H1 (cell line): ENCODE measurements at regions of chr19 and their contacts with region 1.

Region 1: GRCh38 chr19:34475026-34475974 is 6.3 kb upstream of the WTIP start:
- DNase-seq: no peak
- H3K4me3 ChIP-seq: no peak overlapping the region
- H3K27ac ChIP-seq: no peak overlapping the region
- H3K4me1 ChIP-seq: peaks cover 0 to 5% (median 3%) of the 10 kb centered on the region in 4 experiments; a peak in 5 of 7 replicates
- H3K27me3 ChIP-seq: peaks cover 0 to 7% (median 5%) of the 10 kb centered on the region in 4 experiments; a peak in 6 of 7 replicates
- CTCF ChIP-seq: no peak
- EP300 ChIP-seq: no peak
- POLR2A ChIP-seq: no peak
- RAD21 ChIP-seq: no peak

Region 2: DNA sequence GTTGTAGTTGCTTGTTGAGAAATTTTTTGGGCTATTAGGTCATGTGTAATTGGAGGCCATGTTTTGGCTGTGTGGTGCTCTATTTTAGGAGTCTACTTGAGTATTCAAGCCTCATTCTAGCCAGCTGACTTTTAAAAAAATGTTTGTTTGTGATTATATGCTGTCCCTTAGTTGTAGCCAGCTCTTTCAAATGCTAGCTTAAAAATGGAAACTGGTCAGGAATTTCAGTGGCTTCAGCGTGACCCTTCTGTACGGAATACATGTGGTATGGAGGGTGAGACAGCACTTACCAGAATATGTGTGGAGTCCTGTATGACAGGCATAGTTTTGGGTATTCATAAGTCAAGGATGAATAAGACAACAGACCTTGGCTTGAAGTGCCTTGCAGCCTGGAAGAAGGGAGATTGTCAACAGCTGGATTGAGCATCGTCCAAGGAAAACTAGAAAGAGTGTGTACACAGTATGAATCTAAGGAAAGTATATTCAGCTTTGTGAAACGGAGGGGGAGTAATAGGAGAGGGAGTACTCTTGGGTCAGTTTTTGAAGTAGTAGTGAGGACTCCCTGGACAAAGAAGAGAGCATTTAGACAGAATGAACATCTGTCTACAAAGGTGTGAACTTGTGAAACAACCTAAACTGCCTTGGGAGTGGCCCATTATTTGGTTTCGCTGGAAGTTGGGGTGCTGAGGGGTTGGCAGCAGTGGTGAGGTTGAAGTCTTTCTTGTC is 13.8 kb before region 1 on chr19:
- CTCF ChIA-PET with region 1: interaction called, 6 read pairs
- POLR2A ChIA-PET with region 1: interaction called, 47 read pairs
- DNase-seq: no peak
- H3K4me3 ChIP-seq: no peak overlapping the region
- H3K27ac ChIP-seq: no peak overlapping the region
- H3K4me1 ChIP-seq: no peaks in the 10 kb centered on the region
- H3K27me3 ChIP-seq: no peaks in the 10 kb centered on the region
- CTCF ChIP-seq: no peak
- EP300 ChIP-seq: no peak
- POLR2A ChIP-seq: no peak
- RAD21 ChIP-seq: no peak

Region 3: DNA sequence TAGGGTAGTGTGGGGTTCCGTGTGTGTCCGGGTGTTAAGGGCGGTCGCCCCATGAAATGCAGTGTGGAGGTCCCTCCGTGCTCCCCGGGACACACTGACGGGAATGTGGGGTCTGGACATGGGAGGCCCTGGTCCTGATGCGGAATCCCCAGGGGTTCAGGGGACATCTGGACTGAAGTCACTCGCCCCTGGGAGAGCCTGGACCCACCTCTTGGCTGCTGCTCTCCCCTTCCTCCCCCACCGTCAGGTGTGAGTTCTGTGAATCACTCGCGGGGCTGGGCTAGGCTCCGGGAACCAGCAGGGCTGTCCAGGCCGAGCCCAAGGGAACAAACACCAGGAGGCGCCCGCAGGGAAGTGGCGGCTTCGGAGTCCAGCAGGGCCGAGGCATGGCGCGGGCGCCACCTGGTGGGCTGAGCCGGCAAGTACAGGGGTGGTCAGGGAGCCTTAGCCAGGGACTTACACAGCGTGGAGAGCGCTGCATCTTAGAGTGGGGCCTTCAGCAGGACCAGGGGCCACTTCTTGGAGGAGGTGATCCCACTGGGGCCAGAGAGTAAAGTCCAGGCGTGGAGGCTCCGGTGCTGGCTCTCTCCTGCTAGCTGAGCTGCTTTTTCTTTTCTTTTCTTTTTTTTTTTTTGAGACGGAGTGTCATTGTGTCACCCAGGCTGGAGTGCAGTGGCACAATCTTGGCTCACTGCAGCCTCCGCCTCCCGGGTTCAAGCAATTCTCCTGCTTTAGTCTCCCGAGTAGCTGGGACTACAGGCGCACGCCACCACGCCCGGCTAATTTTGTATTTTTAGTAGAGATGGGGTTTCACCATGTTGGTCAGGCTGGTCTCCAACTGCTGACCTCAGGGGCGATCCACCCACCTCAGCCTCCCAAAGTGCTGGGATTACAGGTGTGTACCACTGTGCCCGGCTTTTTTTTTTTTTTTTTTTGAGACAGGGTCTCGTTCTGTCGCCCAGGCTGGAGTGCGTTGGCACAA is 26.3 kb after region 1 on chr19:
- CTCF ChIA-PET with region 1: interaction called, 11 read pairs
- POLR2A ChIA-PET with region 1: interaction called, 6 read pairs
- DNase-seq: peak; percentile 88 to 100
- H3K4me3 ChIP-seq: no peak overlapping the region; a peak in 1 of 8 replicates
- H3K27ac ChIP-seq: no peak overlapping the region
- H3K4me1 ChIP-seq: peaks cover 0 to 8% (median 7%) of the 10 kb centered on the region in 4 experiments; a peak in 5 of 7 replicates
- H3K27me3 ChIP-seq: no peaks in the 10 kb centered on the region
- CTCF ChIP-seq: peak; percentile 98 to 100 (median 98)
- EP300 ChIP-seq: no peak
- POLR2A ChIP-seq: no peak
- RAD21 ChIP-seq: peak; percentile 90 to 94

Region 4: DNA sequence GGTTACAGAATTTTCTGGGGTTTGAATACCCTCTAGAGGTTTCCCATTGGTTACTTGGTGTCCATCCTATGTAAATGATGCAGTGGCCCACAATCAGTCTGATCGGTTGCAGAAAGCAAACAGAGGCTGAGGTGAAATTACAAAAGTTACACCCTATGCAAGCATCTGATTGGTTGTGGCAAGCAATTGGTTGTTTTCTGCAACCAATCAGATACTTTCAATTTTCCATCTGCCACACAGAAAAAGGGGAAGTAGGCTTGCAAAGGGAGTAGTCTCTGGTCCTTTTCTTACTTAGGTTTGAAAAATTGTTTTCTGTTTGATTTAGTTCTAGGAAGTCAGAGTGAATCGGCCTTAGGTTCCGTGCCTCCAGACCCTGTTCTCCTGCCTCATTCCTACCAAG is 99.4 kb after region 1 on chr19:
- CTCF ChIA-PET with region 1: no interaction called
- POLR2A ChIA-PET with region 1: no interaction called
- DNase-seq: no peak
- H3K4me3 ChIP-seq: no peak overlapping the region
- H3K27ac ChIP-seq: no peak overlapping the region
- H3K4me1 ChIP-seq: peaks cover 0 to 5% (median 0%) of the 10 kb centered on the region in 4 experiments; a peak in 1 of 7 replicates
- H3K27me3 ChIP-seq: peaks cover 0 to 3% (median 0%) of the 10 kb centered on the region in 4 experiments; a peak in 1 of 7 replicates
- CTCF ChIP-seq: no peak
- EP300 ChIP-seq: no peak
- POLR2A ChIP-seq: no peak
- RAD21 ChIP-seq: no peak